PC-9 (cell line): ENCODE measurements at regions of chr5 and their contacts with region 1.

Region 1: GRCh38 chr5:40437452-40437861 is 242.3 kb upstream of the PTGER4 start:
- DNase-seq: peak; percentile 77 to 99
- H3K4me3 ChIP-seq: no peak overlapping the region
- H3K27ac ChIP-seq: peak overlapping the region; percentile 74
- H3K4me1 ChIP-seq: peaks cover 22% of the 10 kb centered on the region
- H3K27me3 ChIP-seq: no peaks in the 10 kb centered on the region
- CTCF ChIP-seq: no peak

Region 2: DNA sequence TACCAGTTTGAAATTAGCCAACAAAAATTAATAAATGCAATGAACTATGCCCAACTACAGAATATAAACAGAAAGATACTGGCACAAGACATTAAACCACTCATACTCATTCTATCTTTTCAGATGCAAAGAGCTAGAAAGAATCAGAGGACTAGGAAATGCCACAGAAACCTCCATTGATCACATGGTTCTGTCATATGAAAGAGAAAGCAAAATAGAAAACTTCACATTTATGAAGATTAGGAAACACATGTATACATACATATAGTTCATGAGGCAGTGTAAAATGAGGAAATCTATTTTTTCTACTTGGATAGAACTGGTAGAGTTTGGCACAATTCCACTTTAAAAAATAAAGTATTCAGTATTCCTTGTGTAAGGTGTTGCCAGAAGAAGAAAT is 32.8 kb before region 1 on chr5:
- CTCF ChIA-PET with region 1: no interaction called
- POLR2A ChIA-PET with region 1: interaction called, 4 read pairs
- intact Hi-C with region 1: loop called (anchors 1 kb)
- DNase-seq: no peak
- H3K4me3 ChIP-seq: no peak overlapping the region
- H3K27ac ChIP-seq: 0 out of 2 replicates have a peak overlapping the region, but pooled peaks have one; percentile 8
- H3K4me1 ChIP-seq: peaks cover 40% of the 10 kb centered on the region
- H3K27me3 ChIP-seq: no peaks in the 10 kb centered on the region
- CTCF ChIP-seq: no peak